Posterior cingulate gyrus (tissue), 11 donors: ENCODE measurements at regions of chr2 and their contacts with region 1.

Region 1: GRCh38 chr2:117771969-117772630 is 42.4 kb upstream of the DDX18 start:
- DNase-seq: no peak

Region 2: GRCh38 chr2:117470311-117471095 is 301.6 kb before region 1 on chr2:
- intact Hi-C with region 1: loop called (anchors 5 kb)
- DNase-seq: peak in 3 of 10 donors; percentile 8 to 25 (median 14)

Region 3: GRCh38 chr2:117631152-117631945 is 140.8 kb before region 1 on chr2:
- intact Hi-C with region 1: no loop called
- DNase-seq: no peak

Region 4: DNA sequence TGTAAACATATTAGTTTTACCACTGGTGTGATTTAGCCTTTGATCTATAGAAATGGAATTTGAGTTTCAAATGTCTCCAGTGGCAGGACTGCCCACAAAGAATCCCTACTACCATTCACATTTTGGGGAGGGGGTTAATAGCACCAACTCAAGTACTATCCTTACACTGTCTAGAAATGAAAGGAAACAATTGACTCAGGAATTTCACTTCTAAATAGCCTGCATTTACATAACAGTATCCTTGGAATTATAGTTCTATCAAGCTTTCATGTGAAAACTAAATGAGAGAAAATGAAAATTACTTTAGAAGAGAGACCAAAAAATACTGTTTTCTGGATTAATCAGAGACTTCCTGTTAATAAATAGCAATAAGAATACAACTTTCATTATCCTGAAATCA is 249.3 kb after region 1 on chr2:
- intact Hi-C with region 1: no loop called
- DNase-seq: no peak